ENCODE measurements at regions of chr9 and their contacts with region 1.

Region 1: GRCh38 chr9:105447814-105448812 is at the start of gene FSD1L:
- DNase-seq: peak; percentile 74
- ATAC-seq: peak; percentile 93
- H3K4me3 ChIP-seq: peak within 1 kb of the TSS; percentile 83
- H3K27ac ChIP-seq: peak within 1 kb of the TSS; percentile 16
- H3K4me1 ChIP-seq: no peaks in the 10 kb centered on the region
- H3K27me3 ChIP-seq: no peaks in the 10 kb centered on the region
- CTCF ChIP-seq: peak; percentile 42 to 69 (median 49); a peak in 5 of 6 replicates
- EP300 ChIP-seq: no peak
- POLR2A ChIP-seq: peak; percentile 81
- RAD21 ChIP-seq: peak; percentile 52; the same call in 1 of the 2 replicates
- polyA plus RNA-seq, gene FSD1L: 11.9 to 15.8 TPM

Region 2: GRCh38 chr9:105360344-105360743 is 87.8 kb before region 1 on chr9:
- CTCF ChIA-PET with region 1: no interaction called
- POLR2A ChIA-PET with region 1: no interaction called
- RAD21 ChIA-PET with region 1: no interaction called
- SMC1A ChIA-PET with region 1: no interaction called
- in situ Hi-C with region 1: no loop called
- intact Hi-C with region 1: no loop called
- DNase-seq: no peak
- ATAC-seq: 0 out of 3 replicates have a peak, but pooled peaks have one; percentile 12
- H3K4me3 ChIP-seq: no peak overlapping the region
- H3K27ac ChIP-seq: no peak overlapping the region
- H3K4me1 ChIP-seq: peaks cover 10% of the 10 kb centered on the region
- H3K27me3 ChIP-seq: no peaks in the 10 kb centered on the region
- CTCF ChIP-seq: 0 out of 6 replicates have a peak, but pooled peaks of 1 of the 3 experiments have one; percentile 9
- EP300 ChIP-seq: no peak
- POLR2A ChIP-seq: no peak
- RAD21 ChIP-seq: no peak

Region 3: GRCh38 chr9:105376893-105377292 is 71.2 kb before region 1 on chr9:
- CTCF ChIA-PET with region 1: no interaction called
- POLR2A ChIA-PET with region 1: no interaction called
- RAD21 ChIA-PET with region 1: no interaction called
- SMC1A ChIA-PET with region 1: no interaction called
- in situ Hi-C with region 1: no loop called
- intact Hi-C with region 1: no loop called
- DNase-seq: no peak
- ATAC-seq: no peak
- H3K4me3 ChIP-seq: no peak overlapping the region
- H3K27ac ChIP-seq: no peak overlapping the region
- H3K4me1 ChIP-seq: no peaks in the 10 kb centered on the region
- H3K27me3 ChIP-seq: no peaks in the 10 kb centered on the region
- CTCF ChIP-seq: no peak
- EP300 ChIP-seq: no peak
- POLR2A ChIP-seq: no peak
- RAD21 ChIP-seq: no peak

Region 4: DNA sequence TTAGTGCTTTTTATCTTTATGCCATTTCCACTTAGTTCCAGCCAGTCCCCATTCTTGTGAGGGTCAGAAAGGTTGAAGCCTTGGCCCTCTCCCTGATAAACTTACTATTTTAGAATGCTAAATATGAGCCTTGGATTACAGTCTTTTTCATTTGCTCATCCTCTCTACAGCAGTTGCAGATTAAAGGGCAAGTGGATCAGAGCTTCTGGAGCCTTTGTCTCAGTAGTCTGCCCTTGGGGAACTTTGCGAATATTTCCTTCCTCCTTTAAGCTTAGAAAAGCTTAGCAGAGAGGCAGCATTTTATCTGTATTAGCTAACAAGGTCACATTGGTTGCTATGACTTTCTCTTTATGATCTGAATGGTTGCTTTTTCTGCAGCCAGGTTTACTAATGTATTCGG is 11.2 kb after region 1 on chr9:
- CTCF ChIA-PET with region 1: interaction called, 5 read pairs
- POLR2A ChIA-PET with region 1: no interaction called
- RAD21 ChIA-PET with region 1: interaction called, 8 read pairs
- SMC1A ChIA-PET with region 1: interaction called, 13 read pairs
- in situ Hi-C with region 1: no loop called
- intact Hi-C with region 1: no loop called
- DNase-seq: no peak
- ATAC-seq: no peak
- H3K4me3 ChIP-seq: no peak overlapping the region
- H3K27ac ChIP-seq: no peak overlapping the region
- H3K4me1 ChIP-seq: no peaks in the 10 kb centered on the region
- H3K27me3 ChIP-seq: no peaks in the 10 kb centered on the region
- CTCF ChIP-seq: no peak
- EP300 ChIP-seq: no peak
- POLR2A ChIP-seq: no peak
- RAD21 ChIP-seq: no peak

Region 5: GRCh38 chr9:105475302-105475701 is 27.2 kb after region 1 on chr9:
- CTCF ChIA-PET with region 1: interaction called, 5 read pairs
- POLR2A ChIA-PET with region 1: interaction called, 7 read pairs
- RAD21 ChIA-PET with region 1: interaction called, 10 read pairs
- SMC1A ChIA-PET with region 1: interaction called, 13 read pairs
- in situ Hi-C with region 1: no loop called
- intact Hi-C with region 1: no loop called
- DNase-seq: no peak
- ATAC-seq: peak; percentile 64
- H3K4me3 ChIP-seq: no peak overlapping the region
- H3K27ac ChIP-seq: no peak overlapping the region
- H3K4me1 ChIP-seq: peaks cover 8% of the 10 kb centered on the region; the same call in 1 of the 2 replicates
- H3K27me3 ChIP-seq: no peaks in the 10 kb centered on the region
- CTCF ChIP-seq: no peak; a peak in 1 of 6 replicates
- EP300 ChIP-seq: no peak
- POLR2A ChIP-seq: no peak
- RAD21 ChIP-seq: 0 out of 2 replicates have a peak, but pooled peaks have one; percentile 4

Region 6: DNA sequence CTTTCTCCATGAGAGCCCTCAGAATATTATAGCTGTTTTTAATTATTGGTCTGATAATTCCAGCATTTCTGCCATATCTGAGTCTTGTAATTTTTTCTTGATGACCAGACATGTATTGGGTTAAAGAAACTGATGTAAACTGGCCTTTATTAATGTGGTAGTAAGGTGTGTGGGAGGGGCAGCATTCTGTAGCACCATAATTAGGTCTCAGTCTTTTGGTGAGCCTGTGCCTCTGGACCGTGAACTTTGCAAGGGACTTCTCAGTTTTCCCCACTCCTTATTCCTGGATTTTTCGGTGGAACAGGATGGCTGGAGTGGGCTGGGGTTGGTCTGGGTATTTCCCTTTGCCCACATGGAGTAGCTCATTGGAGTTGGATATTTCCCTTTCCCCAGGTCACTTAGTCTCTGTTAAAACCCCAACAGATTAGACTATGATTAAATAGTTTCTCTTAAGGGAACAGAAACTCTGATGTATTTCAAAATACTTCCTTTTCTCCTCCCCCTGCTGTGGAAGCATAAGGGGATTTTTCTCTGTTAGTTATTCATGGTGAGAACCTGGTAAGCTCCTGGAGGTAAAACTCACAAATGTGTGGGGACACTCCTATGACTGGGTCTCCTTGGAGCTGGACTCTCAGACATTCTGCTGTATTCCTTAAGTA is 52.1 kb after region 1 on chr9:
- CTCF ChIA-PET with region 1: interaction called, 7 read pairs
- POLR2A ChIA-PET with region 1: interaction called, 8 read pairs
- RAD21 ChIA-PET with region 1: interaction called, 6 read pairs
- SMC1A ChIA-PET with region 1: interaction called, 8 read pairs
- in situ Hi-C with region 1: no loop called
- intact Hi-C with region 1: loop called (anchors 2 kb)
- DNase-seq: peak; percentile 62
- ATAC-seq: peak; percentile 75
- H3K4me3 ChIP-seq: peak overlapping the region; percentile 69
- H3K27ac ChIP-seq: peak overlapping the region; percentile 71
- H3K4me1 ChIP-seq: peaks cover 16% of the 10 kb centered on the region
- H3K27me3 ChIP-seq: no peaks in the 10 kb centered on the region
- CTCF ChIP-seq: no peak
- EP300 ChIP-seq: peak in 1 of 2 experiments; percentile 50; a peak in 1 of 4 replicates
- POLR2A ChIP-seq: no peak
- RAD21 ChIP-seq: peak; percentile 21; the same call in 1 of the 2 replicates

Region 7: GRCh38 chr9:105535920-105536668 is 88.0 kb after region 1 on chr9:
- CTCF ChIA-PET with region 1: interaction called, 8 read pairs
- POLR2A ChIA-PET with region 1: no interaction called
- RAD21 ChIA-PET with region 1: interaction called, 10 read pairs
- SMC1A ChIA-PET with region 1: interaction called, 8 read pairs
- in situ Hi-C with region 1: no loop called
- intact Hi-C with region 1: no loop called
- DNase-seq: no peak
- ATAC-seq: peak; percentile 84
- H3K4me3 ChIP-seq: no peak overlapping the region
- H3K27ac ChIP-seq: peak overlapping the region; percentile 49
- H3K4me1 ChIP-seq: peaks cover 8% of the 10 kb centered on the region
- H3K27me3 ChIP-seq: no peaks in the 10 kb centered on the region
- CTCF ChIP-seq: no peak
- EP300 ChIP-seq: no peak
- POLR2A ChIP-seq: no peak
- RAD21 ChIP-seq: no peak

Region 8: GRCh38 chr9:105557771-105558610 is 109.9 kb after region 1 on chr9 and contains the start of gene FKTN:
- CTCF ChIA-PET with region 1: interaction called, 3 read pairs
- POLR2A ChIA-PET with region 1: no interaction called
- RAD21 ChIA-PET with region 1: interaction called, 8 read pairs
- SMC1A ChIA-PET with region 1: interaction called, 5 read pairs
- in situ Hi-C with region 1: no loop called
- intact Hi-C with region 1: loop called (anchors 5 kb)
- DNase-seq: peak; percentile 67
- ATAC-seq: peak; percentile 97
- H3K4me3 ChIP-seq: peak within 1 kb of the TSS; percentile 72
- H3K27ac ChIP-seq: peak within 1 kb of the TSS; percentile 95
- H3K4me1 ChIP-seq: peaks cover 4% of the 10 kb centered on the region
- H3K27me3 ChIP-seq: no peaks in the 10 kb centered on the region
- CTCF ChIP-seq: no peak
- EP300 ChIP-seq: no peak
- POLR2A ChIP-seq: peak; percentile 92
- RAD21 ChIP-seq: no peak
- polyA plus RNA-seq, gene FKTN: 3.6 to 5.5 TPM

Region 9: DNA sequence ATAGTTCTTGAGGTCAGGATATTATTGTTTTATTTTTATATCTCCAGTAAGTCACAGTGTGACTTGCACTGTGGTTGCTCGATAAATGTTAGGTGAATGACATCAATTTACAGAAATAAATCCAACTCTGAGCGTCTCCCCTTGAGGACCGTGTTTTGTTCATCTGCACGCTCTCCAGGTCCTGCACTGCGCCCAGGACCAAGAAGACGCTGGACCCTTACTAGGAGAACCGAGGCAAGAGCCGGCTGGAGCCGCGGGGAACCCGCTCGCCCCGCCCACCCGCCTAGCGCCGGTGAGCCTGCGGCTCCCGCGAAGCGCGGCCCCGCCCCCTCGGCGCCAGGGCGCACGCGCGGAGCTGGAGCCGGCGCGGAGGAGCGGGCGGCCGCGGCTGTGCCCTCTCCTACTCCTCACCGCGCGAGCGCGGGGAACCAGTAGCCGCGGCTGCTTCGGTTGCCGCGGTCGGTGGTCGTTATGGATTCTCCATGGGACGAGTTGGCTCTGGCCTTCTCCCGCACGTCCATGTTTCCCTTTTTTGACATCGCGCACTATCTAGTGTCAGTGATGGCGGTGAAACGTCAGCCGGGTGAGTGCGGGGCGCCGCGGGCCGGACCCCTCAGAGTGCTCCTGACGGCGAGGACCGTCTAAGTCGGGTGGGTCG is 246.2 kb after region 1 on chr9 and contains the start of gene TMEM38B:
- CTCF ChIA-PET with region 1: interaction called, 3 read pairs
- POLR2A ChIA-PET with region 1: no interaction called
- RAD21 ChIA-PET with region 1: interaction called, 3 read pairs
- SMC1A ChIA-PET with region 1: no interaction called
- in situ Hi-C with region 1: no loop called
- intact Hi-C with region 1: loop called (anchors 10 kb)
- DNase-seq: no peak
- ATAC-seq: peak; percentile 88
- H3K4me3 ChIP-seq: peak within 1 kb of the TSS; percentile 78
- H3K27ac ChIP-seq: peak within 1 kb of the TSS; percentile 13
- H3K4me1 ChIP-seq: peaks cover 3% of the 10 kb centered on the region; the same call in 1 of the 2 replicates
- H3K27me3 ChIP-seq: 0 out of 4 replicates have a peak, but pooled peaks cover 0 to 3% of the 10 kb centered on the region in 2 experiments
- CTCF ChIP-seq: no peak
- EP300 ChIP-seq: no peak
- POLR2A ChIP-seq: peak; percentile 71
- RAD21 ChIP-seq: no peak
- polyA plus RNA-seq, gene TMEM38B: 9.9 to 15.4 TPM

Measured in GM12878 (cell line).